ENCODE measurements at regions of chr18 and their contacts with region 1.

Region 1: GRCh38 chr18:46239549-46239948 is 135.4 kb downstream of the HAUS1 start:
- DNase-seq: no peak
- CTCF ChIP-seq: no peak

Region 2: DNA sequence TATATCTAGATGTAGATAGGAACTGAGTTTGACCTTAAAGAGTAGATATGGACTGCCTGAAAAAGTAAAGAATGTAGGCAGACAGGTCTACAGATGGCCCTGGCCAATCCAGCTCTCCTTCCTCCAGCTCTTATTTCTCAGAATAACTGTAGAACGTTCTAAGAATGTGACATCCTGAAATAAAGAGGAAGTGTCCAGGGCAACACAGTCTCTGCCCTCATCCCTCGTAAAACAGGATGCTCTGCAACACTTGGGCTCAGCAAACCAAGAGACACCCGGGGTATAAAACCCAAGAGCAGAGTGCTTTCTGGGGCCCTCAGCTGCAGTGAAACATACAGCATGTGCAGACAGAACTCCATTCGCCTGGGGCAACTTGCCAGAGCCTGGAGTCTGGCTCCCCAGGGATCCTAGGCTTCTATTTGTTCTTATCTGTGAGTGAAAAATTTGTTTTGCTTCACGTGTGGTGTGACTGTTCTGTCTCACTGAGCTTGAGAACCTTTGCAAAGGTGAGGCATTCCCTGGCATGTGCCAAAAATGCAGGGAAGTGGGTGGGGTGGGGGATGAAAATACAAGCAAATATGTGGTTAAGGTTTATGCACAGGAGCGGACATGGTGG is 1157.9 kb before region 1 on chr18:
- CTCF ChIA-PET with region 1: no interaction called
- POLR2A ChIA-PET with region 1: no interaction called
- DNase-seq: no peak
- CTCF ChIP-seq: no peak

Region 3: DNA sequence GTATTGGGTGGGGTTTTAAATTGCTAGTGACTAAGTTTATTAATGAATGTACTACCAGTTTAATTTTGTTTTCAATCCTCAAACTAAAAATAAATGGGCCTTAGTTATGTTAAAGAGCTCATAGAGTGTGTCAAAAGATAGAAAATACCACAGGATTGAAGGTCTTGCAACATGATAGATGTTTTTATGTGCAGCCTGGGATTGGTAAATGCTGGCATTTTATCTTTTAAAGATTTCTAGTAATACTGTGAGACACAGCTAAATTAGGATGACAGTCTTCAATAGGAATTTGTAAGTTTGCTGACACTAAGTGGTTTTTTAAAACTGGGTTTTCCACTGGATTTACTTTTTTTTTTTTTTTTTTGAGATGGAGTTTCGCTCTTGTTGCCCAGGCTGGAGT is 13.1 kb before region 1 on chr18:
- CTCF ChIA-PET with region 1: interaction called, 13 read pairs
- POLR2A ChIA-PET with region 1: no interaction called
- DNase-seq: no peak
- CTCF ChIP-seq: no peak

Region 4: GRCh38 chr18:46481048-46481846 is 241.7 kb after region 1 on chr18:
- CTCF ChIA-PET with region 1: no interaction called
- POLR2A ChIA-PET with region 1: no interaction called
- DNase-seq: peak; percentile 42
- CTCF ChIP-seq: peak; percentile 43